GM12878 (cell line): ENCODE measurements at regions of chr3 and their contacts with region 1.

Region 1: GRCh38 chr3:105868742-105869530 is at the start of gene CBLB:
- DNase-seq: peak; percentile 77
- ATAC-seq: peak; percentile 92
- H3K4me3 ChIP-seq: peak within 1 kb of the TSS; percentile 98
- H3K27ac ChIP-seq: peak within 1 kb of the TSS; percentile 94
- H3K4me1 ChIP-seq: peaks cover 7% of the 10 kb centered on the region
- H3K27me3 ChIP-seq: no peaks in the 10 kb centered on the region
- CTCF ChIP-seq: no peak
- EP300 ChIP-seq: 0 out of 4 replicates have a peak, but pooled peaks of 1 of the 2 experiments have one; percentile 6
- POLR2A ChIP-seq: peak; percentile 85
- RAD21 ChIP-seq: no peak
- polyA plus RNA-seq, gene CBLB: 17.2 to 17.6 TPM

Region 2: GRCh38 chr3:105722943-105723556 is 145.9 kb before region 1 on chr3:
- CTCF ChIA-PET with region 1: no interaction called
- POLR2A ChIA-PET with region 1: no interaction called
- RAD21 ChIA-PET with region 1: no interaction called
- SMC1A ChIA-PET with region 1: interaction called, 7 read pairs
- in situ Hi-C with region 1: no loop called
- intact Hi-C with region 1: loop called (anchors 10 kb)
- DNase-seq: peak; percentile 36
- ATAC-seq: peak; percentile 98
- H3K4me3 ChIP-seq: no peak overlapping the region
- H3K27ac ChIP-seq: no peak overlapping the region
- H3K4me1 ChIP-seq: peaks cover 7% of the 10 kb centered on the region; the same call in 1 of the 2 replicates
- H3K27me3 ChIP-seq: no peaks in the 10 kb centered on the region
- CTCF ChIP-seq: no peak
- EP300 ChIP-seq: peak; percentile 92 to 98
- POLR2A ChIP-seq: no peak
- RAD21 ChIP-seq: no peak

Region 3: DNA sequence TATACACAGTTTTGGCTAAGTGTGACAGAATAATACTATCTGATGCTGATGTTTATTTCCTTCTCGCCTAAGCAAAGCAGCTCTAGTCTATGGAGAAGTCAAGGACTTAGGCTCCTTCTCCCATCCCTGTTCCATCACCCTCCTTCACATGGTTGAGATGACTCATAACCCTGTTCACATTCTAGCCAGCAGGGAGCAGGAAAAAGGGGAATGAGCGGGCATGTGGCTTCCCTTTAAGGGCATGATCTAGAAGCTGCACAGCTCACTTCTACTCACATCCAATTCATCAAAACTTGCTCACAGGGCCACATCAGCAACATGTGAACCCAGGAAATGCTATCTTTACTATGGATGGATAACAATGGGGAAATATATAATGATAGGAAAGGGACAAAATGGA is 41.0 kb before region 1 on chr3:
- CTCF ChIA-PET with region 1: no interaction called
- POLR2A ChIA-PET with region 1: interaction called, 3 read pairs
- RAD21 ChIA-PET with region 1: interaction called, 14 read pairs
- SMC1A ChIA-PET with region 1: interaction called, 14 read pairs
- in situ Hi-C with region 1: no loop called
- intact Hi-C with region 1: loop called (anchors 5 kb)
- DNase-seq: no peak
- ATAC-seq: peak; percentile 23
- H3K4me3 ChIP-seq: no peak overlapping the region
- H3K27ac ChIP-seq: peak overlapping the region; percentile 81
- H3K4me1 ChIP-seq: peaks cover 44% of the 10 kb centered on the region
- H3K27me3 ChIP-seq: no peaks in the 10 kb centered on the region
- CTCF ChIP-seq: no peak
- EP300 ChIP-seq: no peak
- POLR2A ChIP-seq: no peak
- RAD21 ChIP-seq: 0 out of 2 replicates have a peak, but pooled peaks have one; percentile 6

Region 4: DNA sequence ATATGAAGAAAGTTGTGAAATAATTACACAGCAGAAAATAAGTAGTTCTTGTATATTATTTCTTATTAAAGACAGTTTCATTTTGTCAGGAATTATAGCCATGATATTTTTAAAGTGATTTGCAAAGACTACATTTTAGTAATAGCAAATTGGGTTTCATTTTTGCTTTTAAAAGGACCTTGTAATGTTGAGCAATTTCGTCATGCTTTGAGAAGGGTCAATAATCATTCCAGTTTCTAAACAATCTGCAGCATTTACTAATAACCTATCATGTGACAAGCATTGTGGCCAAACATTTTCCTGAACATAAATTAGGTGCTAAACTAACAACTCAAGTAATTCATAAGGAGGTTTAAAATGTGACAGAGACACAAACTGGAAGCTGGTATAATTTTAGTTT is 214.3 kb after region 1 on chr3:
- CTCF ChIA-PET with region 1: no interaction called
- POLR2A ChIA-PET with region 1: no interaction called
- RAD21 ChIA-PET with region 1: no interaction called
- SMC1A ChIA-PET with region 1: no interaction called
- in situ Hi-C with region 1: no loop called
- intact Hi-C with region 1: loop called (anchors 5 kb)
- DNase-seq: no peak
- ATAC-seq: peak; percentile 78
- H3K4me3 ChIP-seq: no peak overlapping the region
- H3K27ac ChIP-seq: no peak overlapping the region
- H3K4me1 ChIP-seq: peaks cover 2% of the 10 kb centered on the region; the same call in 1 of the 2 replicates
- H3K27me3 ChIP-seq: no peaks in the 10 kb centered on the region
- CTCF ChIP-seq: no peak
- EP300 ChIP-seq: no peak
- POLR2A ChIP-seq: no peak
- RAD21 ChIP-seq: no peak

Region 5: DNA sequence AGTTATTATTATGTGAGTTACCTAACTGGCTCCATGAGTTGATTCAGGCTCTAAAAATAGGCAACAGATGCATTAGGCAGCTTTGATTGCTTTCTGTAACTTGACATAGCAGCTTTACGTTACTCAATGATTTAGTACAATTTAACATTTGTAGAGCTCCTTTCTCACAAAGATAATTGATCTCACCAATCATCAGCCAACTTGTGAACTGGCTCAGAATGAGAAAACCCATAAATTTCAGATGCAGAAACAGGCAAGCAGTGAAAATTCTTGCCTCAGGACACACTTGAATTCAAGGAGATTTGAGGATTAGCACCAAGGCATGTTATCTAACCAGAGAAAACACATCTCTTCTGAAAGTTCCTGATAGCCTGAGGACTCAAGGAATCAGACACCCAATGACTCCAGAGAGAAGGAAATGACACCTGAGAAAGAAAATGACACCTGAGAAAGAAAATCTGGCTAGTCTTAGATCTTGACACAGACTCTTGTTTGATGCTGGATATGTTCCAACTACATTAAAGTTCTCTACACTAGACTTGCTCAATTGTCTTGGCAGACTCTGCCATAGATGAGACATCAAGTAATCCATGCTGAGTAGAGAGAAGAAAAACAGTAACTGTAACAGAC is 314.9 kb after region 1 on chr3:
- CTCF ChIA-PET with region 1: no interaction called
- POLR2A ChIA-PET with region 1: interaction called, 3 read pairs
- RAD21 ChIA-PET with region 1: interaction called, 39 read pairs
- SMC1A ChIA-PET with region 1: interaction called, 45 read pairs
- in situ Hi-C with region 1: no loop called
- intact Hi-C with region 1: loop called (anchors 1 kb)
- DNase-seq: peak; percentile 81
- ATAC-seq: peak; percentile 70
- H3K4me3 ChIP-seq: no peak overlapping the region
- H3K27ac ChIP-seq: peak overlapping the region; percentile 100
- H3K4me1 ChIP-seq: peaks cover 24% of the 10 kb centered on the region
- H3K27me3 ChIP-seq: no peaks in the 10 kb centered on the region
- CTCF ChIP-seq: no peak
- EP300 ChIP-seq: no peak
- POLR2A ChIP-seq: no peak
- RAD21 ChIP-seq: no peak

Region 6: DNA sequence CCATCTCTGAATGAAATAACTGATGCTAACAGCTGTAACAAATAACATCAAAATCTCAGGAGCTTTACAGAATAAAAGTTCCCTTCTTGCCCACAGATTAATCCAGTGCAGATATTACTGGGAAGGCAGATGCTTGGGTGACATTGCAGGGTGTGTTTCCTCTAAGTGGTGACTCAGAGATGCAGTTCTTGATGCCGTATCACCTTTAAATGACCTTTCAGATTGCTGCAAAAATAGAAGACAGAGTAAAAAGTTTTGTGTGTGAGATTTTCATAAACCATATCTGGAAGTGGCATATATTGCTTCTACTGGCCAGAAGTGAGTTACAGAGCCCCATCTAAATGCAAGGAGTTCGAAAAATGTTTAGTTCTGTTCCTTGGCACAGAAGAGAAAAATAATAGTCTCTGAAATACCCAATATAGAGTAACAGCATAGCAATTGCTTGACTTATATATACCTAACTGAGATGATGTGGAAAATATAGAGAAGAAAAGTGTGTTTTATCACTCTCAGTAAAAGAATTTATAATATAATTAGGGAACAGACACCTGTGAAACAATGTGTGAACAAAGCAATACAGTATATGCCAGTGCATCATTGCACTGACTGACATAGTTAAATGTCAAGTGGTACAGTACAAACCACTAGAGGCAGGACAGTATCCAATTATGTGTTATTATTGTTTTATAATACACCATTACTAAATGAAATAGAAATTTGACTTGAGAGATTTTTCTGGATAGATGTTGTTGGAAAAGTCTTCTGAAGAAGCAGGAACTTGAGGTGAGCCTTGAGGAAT is 430.6 kb after region 1 on chr3:
- CTCF ChIA-PET with region 1: no interaction called
- POLR2A ChIA-PET with region 1: interaction called, 3 read pairs
- RAD21 ChIA-PET with region 1: interaction called, 6 read pairs
- SMC1A ChIA-PET with region 1: interaction called, 4 read pairs
- in situ Hi-C with region 1: no loop called
- intact Hi-C with region 1: loop called (anchors 5 kb)
- DNase-seq: peak; percentile 90
- ATAC-seq: peak; percentile 71
- H3K4me3 ChIP-seq: no peak overlapping the region
- H3K27ac ChIP-seq: peak overlapping the region; percentile 92
- H3K4me1 ChIP-seq: peaks cover 47% of the 10 kb centered on the region
- H3K27me3 ChIP-seq: no peaks in the 10 kb centered on the region
- CTCF ChIP-seq: no peak
- EP300 ChIP-seq: peak; percentile 73 to 79; a peak in 2 of 4 replicates
- POLR2A ChIP-seq: no peak
- RAD21 ChIP-seq: 0 out of 2 replicates have a peak, but pooled peaks have one; percentile 6

Region 7: GRCh38 chr3:106609666-106610301 is 740.8 kb after region 1 on chr3:
- CTCF ChIA-PET with region 1: interaction called, 4 read pairs
- POLR2A ChIA-PET with region 1: no interaction called
- RAD21 ChIA-PET with region 1: interaction called, 4 read pairs
- SMC1A ChIA-PET with region 1: no interaction called
- in situ Hi-C with region 1: loop called (anchors 25 kb)
- intact Hi-C with region 1: loop called (anchors 2 kb)
- DNase-seq: peak; percentile 77
- ATAC-seq: peak; percentile 95
- H3K4me3 ChIP-seq: no peak overlapping the region
- H3K27ac ChIP-seq: peak overlapping the region; percentile 55
- H3K4me1 ChIP-seq: peaks cover 5% of the 10 kb centered on the region
- H3K27me3 ChIP-seq: no peaks in the 10 kb centered on the region
- CTCF ChIP-seq: peak; percentile 83 to 87 (median 86)
- EP300 ChIP-seq: no peak
- POLR2A ChIP-seq: no peak
- RAD21 ChIP-seq: peak; percentile 99